CD14-positive monocyte (primary cell): ENCODE measurements at regions of chr13 and their contacts with region 1.

Region 1: GRCh38 chr13:32427852-32428580 is at the start of gene N4BP2L1:
- DNase-seq: peak; percentile 67 to 86 (median 77)
- H3K4me3 ChIP-seq: peak within 1 kb of the TSS; percentile 70 to 100 (median 81)
- H3K4me3 Mint-ChIP-seq: peak within 1 kb of the TSS; percentile 96 to 97
- H3K27ac ChIP-seq: peak within 1 kb of the TSS; percentile 95 to 96
- H3K27ac Mint-ChIP-seq: peak within 1 kb of the TSS; percentile 99 to 100 (median 99)
- H3K4me1 ChIP-seq: peaks cover 44 to 52% of the 10 kb centered on the region in 2 donors
- H3K4me1 Mint-ChIP-seq: peaks cover 49% of the 10 kb centered on the region
- H3K27me3 ChIP-seq: no peaks in the 10 kb centered on the region
- H3K27me3 Mint-ChIP-seq: peaks cover 0 to 3% (median 2%) of the 10 kb centered on the region in 3 donors
- CTCF ChIP-seq: no peak
- polyA plus RNA-seq, gene N4BP2L1: 50.9 to 82.5 (median 81.5) TPM

Region 2: DNA sequence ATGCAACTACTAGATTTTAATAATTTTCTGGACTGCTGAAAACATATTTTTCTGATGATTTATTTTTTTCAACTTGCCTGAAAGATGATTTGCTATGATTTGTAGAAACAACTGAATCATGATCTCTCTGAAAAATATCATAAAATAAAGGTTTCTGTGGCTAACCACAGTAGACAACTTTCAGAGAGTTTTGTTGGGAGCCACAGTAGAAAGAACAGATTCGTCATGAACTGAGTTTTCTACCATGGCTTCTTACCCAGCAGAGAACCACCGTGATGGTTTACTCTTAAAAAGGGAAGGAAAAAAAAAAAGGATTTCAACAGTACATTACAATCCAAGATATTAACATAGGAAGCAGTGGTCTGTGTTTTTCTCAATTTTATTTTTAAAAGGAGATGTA is 130.8 kb before region 1 on chr13:
- intact Hi-C with region 1: no loop called
- DNase-seq: no peak
- H3K4me3 ChIP-seq: no peak overlapping the region
- H3K4me3 Mint-ChIP-seq: no peak overlapping the region
- H3K27ac ChIP-seq: no peak overlapping the region
- H3K27ac Mint-ChIP-seq: no peak overlapping the region
- H3K4me1 ChIP-seq: no peaks in the 10 kb centered on the region
- H3K4me1 Mint-ChIP-seq: peaks cover 2% of the 10 kb centered on the region
- H3K27me3 ChIP-seq: no peaks in the 10 kb centered on the region
- H3K27me3 Mint-ChIP-seq: peaks cover 0 to 3% (median 0%) of the 10 kb centered on the region in 3 donors
- CTCF ChIP-seq: no peak

Region 3: GRCh38 chr13:32310134-32310706 is 117.8 kb before region 1 on chr13:
- intact Hi-C with region 1: loop called (anchors 5 to 10 kb)
- DNase-seq: peak; percentile 25 to 52 (median 36)
- H3K4me3 ChIP-seq: peak overlapping the region; percentile 24 to 78 (median 76)
- H3K4me3 Mint-ChIP-seq: peak overlapping the region; percentile 69 to 86
- H3K27ac ChIP-seq: peak overlapping the region in 1 of 2 donors; percentile 55
- H3K27ac Mint-ChIP-seq: peak overlapping the region in 4 of 7 donors; percentile 44 to 82 (median 60)
- H3K4me1 ChIP-seq: peaks cover 15 to 28% of the 10 kb centered on the region in 2 donors
- H3K4me1 Mint-ChIP-seq: peaks cover 21% of the 10 kb centered on the region
- H3K27me3 ChIP-seq: no peaks in the 10 kb centered on the region
- H3K27me3 Mint-ChIP-seq: no peaks in the 10 kb centered on the region
- CTCF ChIP-seq: peak; percentile 78

Region 4: DNA sequence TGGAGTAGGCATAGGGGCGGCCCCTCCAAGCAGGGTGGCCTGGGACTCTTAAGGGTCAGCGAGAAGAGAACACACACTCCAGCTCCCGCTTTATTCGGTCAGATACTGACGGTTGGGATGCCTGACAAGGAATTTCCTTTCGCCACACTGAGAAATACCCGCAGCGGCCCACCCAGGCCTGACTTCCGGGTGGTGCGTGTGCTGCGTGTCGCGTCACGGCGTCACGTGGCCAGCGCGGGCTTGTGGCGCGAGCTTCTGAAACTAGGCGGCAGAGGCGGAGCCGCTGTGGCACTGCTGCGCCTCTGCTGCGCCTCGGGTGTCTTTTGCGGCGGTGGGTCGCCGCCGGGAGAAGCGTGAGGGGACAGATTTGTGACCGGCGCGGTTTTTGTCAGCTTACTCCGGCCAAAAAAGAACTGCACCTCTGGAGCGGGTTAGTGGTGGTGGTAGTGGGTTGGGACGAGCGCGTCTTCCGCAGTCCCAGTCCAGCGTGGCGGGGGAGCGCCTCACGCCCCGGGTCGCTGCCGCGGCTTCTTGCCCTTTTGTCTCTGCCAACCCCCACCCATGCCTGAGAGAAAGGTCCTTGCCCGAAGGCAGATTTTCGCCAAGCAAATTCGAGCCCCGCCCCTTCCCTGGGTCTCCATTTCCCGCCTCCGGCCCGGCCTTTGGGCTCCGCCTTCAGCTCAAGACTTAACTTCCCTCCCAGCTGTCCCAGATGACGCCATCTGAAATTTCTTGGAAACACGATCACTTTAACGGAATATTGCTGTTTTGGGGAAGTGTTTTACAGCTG is 112.6 kb before region 1 on chr13 and contains the starts of genes BRCA2 and ZAR1L:
- intact Hi-C with region 1: loop called (anchors 5 to 10 kb)
- DNase-seq: peak; percentile 84 to 94 (median 87)
- H3K4me3 ChIP-seq: peak within 1 kb of the TSS; percentile 78 to 93 (median 90)
- H3K4me3 Mint-ChIP-seq: peak within 1 kb of the TSS; percentile 93 to 96
- H3K27ac ChIP-seq: peak within 1 kb of the TSS; percentile 95 to 99
- H3K27ac Mint-ChIP-seq: peak within 1 kb of the TSS; percentile 99 to 100 (median 100)
- H3K4me1 ChIP-seq: peaks cover 32 to 40% of the 10 kb centered on the region in 2 donors
- H3K4me1 Mint-ChIP-seq: peaks cover 25% of the 10 kb centered on the region
- H3K27me3 ChIP-seq: no peaks in the 10 kb centered on the region
- H3K27me3 Mint-ChIP-seq: peaks cover 0 to 3% (median 0%) of the 10 kb centered on the region in 3 donors
- CTCF ChIP-seq: no peak
- polyA plus RNA-seq, gene BRCA2: 0.32 to 0.36 (median 0.36) TPM
- polyA plus RNA-seq, gene ZAR1L: not detected

Region 5: GRCh38 chr13:32376642-32377415 is 51.2 kb before region 1 on chr13:
- intact Hi-C with region 1: no loop called
- DNase-seq: no peak
- H3K4me3 ChIP-seq: no peak overlapping the region
- H3K4me3 Mint-ChIP-seq: no peak overlapping the region
- H3K27ac ChIP-seq: no peak overlapping the region
- H3K27ac Mint-ChIP-seq: no peak overlapping the region
- H3K4me1 ChIP-seq: no peaks in the 10 kb centered on the region
- H3K4me1 Mint-ChIP-seq: no peaks in the 10 kb centered on the region
- H3K27me3 ChIP-seq: no peaks in the 10 kb centered on the region
- H3K27me3 Mint-ChIP-seq: no peaks in the 10 kb centered on the region
- CTCF ChIP-seq: no peak

Region 6: DNA sequence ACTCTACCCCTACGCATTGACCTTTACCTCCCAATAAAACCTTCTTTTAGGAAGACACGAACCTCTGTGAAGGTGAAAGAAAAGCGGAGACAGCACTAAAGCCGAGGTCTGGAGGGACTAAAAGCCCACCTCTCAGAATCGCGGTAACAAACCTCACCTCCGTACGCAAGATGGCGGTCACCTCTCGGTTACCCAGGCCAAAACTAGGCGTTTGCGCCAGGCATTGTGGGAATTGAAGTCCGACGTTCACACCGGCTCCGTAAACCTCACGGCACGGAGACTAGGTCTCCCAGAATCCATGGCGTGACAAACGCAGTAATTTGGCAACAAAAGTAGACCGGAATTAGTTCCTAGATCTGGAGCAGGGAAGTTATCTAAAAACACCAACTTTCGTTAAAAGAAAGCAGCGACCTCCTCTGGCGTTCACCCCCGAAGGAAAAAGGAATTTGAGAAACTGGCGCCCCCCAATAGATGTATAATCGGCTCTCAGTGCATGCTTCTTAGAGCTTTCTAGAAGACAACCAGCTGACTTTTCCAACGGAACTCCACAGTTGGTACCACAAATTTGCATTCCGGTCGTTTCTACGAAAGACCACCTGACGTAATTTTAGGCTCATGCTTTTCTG is 110.7 kb after region 1 on chr13 and contains the start of gene N4BP2L2:
- intact Hi-C with region 1: loop called in 1 of 2 experiments (anchors 5 kb)
- DNase-seq: peak; percentile 93 to 97 (median 96)
- H3K4me3 ChIP-seq: peak within 1 kb of the TSS; percentile 80 to 97 (median 95)
- H3K4me3 Mint-ChIP-seq: peak within 1 kb of the TSS; percentile 95 to 96
- H3K27ac ChIP-seq: peak within 1 kb of the TSS; percentile 96 to 99
- H3K27ac Mint-ChIP-seq: peak within 1 kb of the TSS; percentile 98 to 100 (median 99)
- H3K4me1 ChIP-seq: peaks cover 18 to 38% of the 10 kb centered on the region in 2 donors
- H3K4me1 Mint-ChIP-seq: peaks cover 41% of the 10 kb centered on the region
- H3K27me3 ChIP-seq: no peaks in the 10 kb centered on the region
- H3K27me3 Mint-ChIP-seq: peaks cover 0 to 3% (median 0%) of the 10 kb centered on the region in 3 donors
- CTCF ChIP-seq: peak; percentile 9
- polyA plus RNA-seq, gene N4BP2L2: 94.2 to 105 (median 96.4) TPM